ENCODE measurements at regions of chr6 and their contacts with region 1.

Region 1: GRCh38 chr6:137202078-137202477 is 17.1 kb downstream of the IFNGR1 start:
- DNase-seq: no peak

Region 2: GRCh38 chr6:137094411-137095008 is 107.6 kb before region 1 on chr6:
- intact Hi-C with region 1: loop called (anchors 5 kb)
- DNase-seq: no peak